AG04449 (cell line): ENCODE measurements at regions of chr12 and their contacts with region 1.

Region 1: DNA sequence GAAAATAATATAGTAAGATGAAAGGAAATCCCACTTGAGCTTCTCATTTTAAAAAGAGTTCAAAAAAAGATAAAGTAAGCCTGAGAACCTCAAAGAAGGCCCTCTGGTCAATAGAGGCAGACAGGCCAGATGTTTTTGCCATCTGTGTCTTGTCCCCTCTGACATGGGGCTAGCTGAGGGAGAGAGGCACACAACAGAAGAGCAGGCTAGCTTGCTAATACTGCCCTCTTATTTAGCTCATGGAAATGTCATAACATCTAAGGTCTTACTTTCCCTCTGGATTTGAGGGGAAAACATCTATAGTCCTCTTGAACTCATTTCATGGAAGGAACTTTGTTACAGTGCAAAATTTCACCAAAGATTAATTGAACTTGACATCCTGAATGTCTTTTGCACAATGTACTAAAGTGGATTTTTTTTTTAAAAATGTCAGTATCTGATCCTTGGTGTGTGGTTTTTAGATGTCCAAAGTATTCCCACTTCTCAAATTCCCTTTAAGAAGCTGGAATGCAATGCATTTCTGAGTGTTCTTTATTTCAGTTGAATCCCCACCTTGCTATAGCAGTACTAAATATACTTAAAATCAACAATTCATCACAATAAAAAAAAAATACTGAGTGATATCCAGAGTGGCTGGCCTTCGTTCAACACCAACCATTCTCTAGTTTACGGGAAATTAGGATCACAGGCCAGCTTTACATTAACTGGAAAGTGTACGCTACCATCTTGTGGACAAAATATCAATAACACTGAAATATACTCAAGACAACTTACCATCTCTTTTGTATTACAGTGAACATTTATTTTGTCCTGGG is 176.7 kb downstream of the PAH start:
- DNase-seq: peak; percentile 16
- H3K4me3 ChIP-seq: no peak overlapping the region
- CTCF ChIP-seq: peak; percentile 7

Region 2: GRCh38 chr12:102095675-102096263 is 644.6 kb before region 1 on chr12:
- CTCF ChIA-PET with region 1: interaction called, 27 read pairs
- POLR2A ChIA-PET with region 1: no interaction called
- DNase-seq: no peak
- H3K4me3 ChIP-seq: no peak overlapping the region
- CTCF ChIP-seq: peak; percentile 39

Region 3: GRCh38 chr12:102169922-102170621 is 570.3 kb before region 1 on chr12:
- CTCF ChIA-PET with region 1: interaction called, 21 read pairs
- POLR2A ChIA-PET with region 1: no interaction called
- DNase-seq: no peak
- H3K4me3 ChIP-seq: no peak overlapping the region
- CTCF ChIP-seq: peak; percentile 55

Region 4: GRCh38 chr12:102300824-102301461 is 439.4 kb before region 1 on chr12:
- CTCF ChIA-PET with region 1: interaction called, 13 read pairs
- POLR2A ChIA-PET with region 1: no interaction called
- DNase-seq: no peak
- H3K4me3 ChIP-seq: no peak overlapping the region
- CTCF ChIP-seq: peak; percentile 32

Region 5: GRCh38 chr12:102513272-102513671 is 227.1 kb before region 1 on chr12:
- CTCF ChIA-PET with region 1: interaction called, 22 read pairs
- POLR2A ChIA-PET with region 1: no interaction called
- DNase-seq: no peak
- H3K4me3 ChIP-seq: no peak overlapping the region
- CTCF ChIP-seq: no peak

Region 6: GRCh38 chr12:102567031-102567985 is 173.0 kb before region 1 on chr12:
- CTCF ChIA-PET with region 1: no interaction called
- POLR2A ChIA-PET with region 1: no interaction called
- DNase-seq: peak; percentile 73
- H3K4me3 ChIP-seq: no peak overlapping the region
- CTCF ChIP-seq: no peak

Region 7: DNA sequence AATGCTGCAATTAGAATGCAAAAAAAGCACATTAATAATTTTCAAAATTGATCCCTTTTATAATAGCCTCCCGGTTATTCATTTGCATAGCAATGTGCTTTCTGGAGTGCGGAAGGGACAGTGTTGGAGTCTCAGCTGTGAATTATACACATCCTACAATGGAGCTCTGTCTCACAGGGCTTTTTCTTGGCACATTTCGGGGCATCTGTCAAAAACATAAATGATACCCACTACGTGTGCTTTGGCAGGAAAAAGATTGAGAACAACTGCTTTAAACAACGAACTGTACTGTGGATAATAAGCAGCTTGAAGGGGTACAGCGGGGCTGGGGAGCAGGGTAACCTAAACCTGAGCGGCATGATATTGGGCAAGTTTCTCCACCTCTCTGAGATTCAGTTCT is 53.6 kb after region 1 on chr12:
- CTCF ChIA-PET with region 1: no interaction called
- POLR2A ChIA-PET with region 1: no interaction called
- DNase-seq: no peak
- H3K4me3 ChIP-seq: no peak overlapping the region
- CTCF ChIP-seq: no peak